ENCODE measurements at regions of chr2 and their contacts with region 1.

Region 1: DNA sequence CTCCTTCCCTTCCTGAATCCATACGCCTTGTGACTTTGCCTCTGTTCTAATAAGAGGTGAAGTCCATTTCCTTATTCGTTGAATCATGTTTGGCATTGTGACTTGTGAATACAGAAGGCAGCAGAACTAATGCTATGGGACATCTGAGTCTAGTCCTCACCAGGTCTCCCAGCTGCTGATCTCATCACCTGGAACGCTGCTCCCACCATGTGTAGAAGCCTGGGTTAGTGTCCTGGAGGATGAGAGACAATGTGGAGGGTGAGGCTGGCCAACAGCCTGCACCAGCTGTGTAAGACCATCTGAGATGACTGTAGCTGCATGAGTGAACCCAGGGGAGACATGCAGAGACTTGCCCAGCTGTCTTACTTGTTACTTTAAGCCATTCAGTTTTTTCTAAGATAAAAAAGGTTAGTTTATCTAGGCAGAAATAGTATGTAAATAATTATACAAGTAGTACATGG is 3.5 kb upstream of the HAAO start:
- DNase-seq: peak; percentile 57
- H3K4me3 Mint-ChIP-seq: no peak overlapping the region
- H3K27ac Mint-ChIP-seq: peak overlapping the region; percentile 76
- H3K4me1 Mint-ChIP-seq: peaks cover 13% of the 10 kb centered on the region
- H3K27me3 Mint-ChIP-seq: no peaks in the 10 kb centered on the region
- CTCF ChIP-seq: no peak

Region 2: DNA sequence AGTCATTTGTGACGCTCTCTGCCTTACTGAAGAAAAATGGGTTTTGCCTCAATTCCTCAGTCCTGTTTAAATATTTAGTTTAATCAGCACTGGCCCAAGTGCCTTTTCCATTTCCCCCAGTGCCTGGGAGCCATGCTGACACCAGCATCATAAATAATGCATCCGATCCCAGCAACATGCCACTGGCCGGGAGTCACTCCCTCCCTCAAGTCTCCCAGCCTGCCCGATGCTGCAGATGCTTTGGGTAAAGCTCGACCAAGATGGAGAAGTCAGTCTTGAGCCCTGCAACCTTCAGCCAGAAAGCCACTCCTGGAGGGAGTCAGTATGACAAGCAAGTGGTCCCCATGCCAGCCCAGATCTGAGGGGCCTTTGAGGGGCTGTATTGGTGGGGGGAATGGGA is 239.5 kb before region 1 on chr2:
- CTCF ChIA-PET with region 1: no interaction called
- POLR2A ChIA-PET with region 1: no interaction called
- intact Hi-C with region 1: no loop called
- DNase-seq: no peak
- H3K4me3 Mint-ChIP-seq: no peak overlapping the region
- H3K27ac Mint-ChIP-seq: no peak overlapping the region
- H3K4me1 Mint-ChIP-seq: no peaks in the 10 kb centered on the region
- H3K27me3 Mint-ChIP-seq: no peaks in the 10 kb centered on the region
- CTCF ChIP-seq: no peak

Region 3: DNA sequence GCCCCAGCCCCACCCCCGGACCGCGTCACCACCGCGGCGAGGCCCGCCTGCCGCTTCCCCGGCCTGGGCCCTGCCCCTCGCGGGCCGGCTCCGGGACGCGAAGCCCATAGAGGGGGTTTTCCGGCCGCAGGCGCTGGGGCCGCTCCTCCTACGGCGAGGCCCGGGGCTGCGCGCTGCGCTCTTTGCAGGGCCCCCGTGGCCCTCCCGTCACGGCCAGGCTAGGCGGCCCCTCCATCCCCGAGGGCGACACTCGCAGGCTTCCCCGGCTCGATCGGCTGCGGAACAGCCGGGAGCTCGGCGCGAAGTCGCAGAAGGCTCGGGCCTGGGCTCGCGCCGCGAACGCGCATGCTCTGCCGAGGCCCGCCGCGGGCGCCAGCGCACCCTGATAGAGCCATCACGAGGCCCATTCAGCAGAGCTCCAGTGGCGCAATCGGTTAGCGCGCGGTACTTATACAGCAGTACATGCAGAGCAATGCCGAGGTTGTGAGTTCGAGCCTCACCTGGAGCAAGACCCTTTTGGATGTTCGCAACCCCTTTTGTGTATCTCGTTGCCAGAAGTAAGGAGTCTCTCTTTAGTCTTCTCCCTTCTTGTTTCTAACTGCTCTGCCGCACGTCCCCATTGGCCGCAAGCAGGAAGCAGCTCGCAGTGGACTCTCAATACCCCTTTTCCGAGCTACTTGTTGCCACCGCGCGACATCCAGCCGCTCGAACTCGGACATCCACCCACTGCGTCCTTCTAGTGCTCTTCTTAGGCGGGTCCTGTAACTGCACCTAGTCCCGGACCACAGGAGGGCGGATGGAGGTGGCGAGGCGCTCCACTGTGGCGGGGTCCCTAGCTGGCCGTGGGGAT is 14.5 kb after region 1 on chr2:
- CTCF ChIA-PET with region 1: interaction called, 5 read pairs
- POLR2A ChIA-PET with region 1: interaction called, 14 read pairs
- intact Hi-C with region 1: no loop called
- DNase-seq: peak; percentile 92
- H3K4me3 Mint-ChIP-seq: peak overlapping the region; percentile 80
- H3K27ac Mint-ChIP-seq: peak overlapping the region; percentile 84
- H3K4me1 Mint-ChIP-seq: peaks cover 13% of the 10 kb centered on the region
- H3K27me3 Mint-ChIP-seq: no peaks in the 10 kb centered on the region
- CTCF ChIP-seq: no peak

Region 4: GRCh38 chr2:42823744-42824453 is 28.0 kb after region 1 on chr2:
- CTCF ChIA-PET with region 1: no interaction called
- POLR2A ChIA-PET with region 1: no interaction called
- intact Hi-C with region 1: no loop called
- DNase-seq: no peak
- H3K4me3 Mint-ChIP-seq: no peak overlapping the region
- H3K27ac Mint-ChIP-seq: no peak overlapping the region
- H3K4me1 Mint-ChIP-seq: peaks cover 13% of the 10 kb centered on the region
- H3K27me3 Mint-ChIP-seq: no peaks in the 10 kb centered on the region
- CTCF ChIP-seq: no peak

Measured in MCF 10A (cell line).